Lower leg skin (tissue), 4 donors: ENCODE measurements at regions of chr2 and their contacts with region 1.

Region 1: GRCh38 chr2:230000118-230000841 is 68.4 kb downstream of the SLC16A14 start:
- DNase-seq: no peak
- H3K4me3 ChIP-seq: no peak overlapping the region
- CTCF ChIP-seq: no peak
- POLR2A ChIP-seq: no peak

Region 2: GRCh38 chr2:230153390-230153976 is 153.2 kb after region 1 on chr2:
- intact Hi-C with region 1: loop called (anchors 2 kb)
- DNase-seq: no peak
- H3K4me3 ChIP-seq: no peak overlapping the region
- CTCF ChIP-seq: no peak
- POLR2A ChIP-seq: no peak

Region 3: DNA sequence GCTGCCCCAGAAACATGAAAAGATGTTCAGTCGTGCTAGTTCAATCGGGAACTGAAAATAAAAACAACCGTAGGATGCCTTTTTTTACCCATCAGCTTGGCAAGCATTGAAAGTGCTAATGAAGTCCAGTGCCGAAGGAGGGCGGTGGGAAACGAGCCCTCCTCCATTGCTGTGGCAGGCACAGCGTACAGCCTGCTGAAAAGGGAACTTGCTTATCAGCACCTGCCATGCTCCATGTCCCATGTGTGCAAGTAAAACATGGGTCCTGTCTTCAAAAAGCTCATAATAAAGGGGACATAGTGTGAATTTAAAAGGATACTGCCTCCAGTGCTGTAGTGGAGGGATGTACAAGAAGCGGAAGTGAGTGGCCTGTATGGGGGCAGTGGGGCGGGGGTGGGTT is 1280.6 kb after region 1 on chr2:
- intact Hi-C with region 1: no loop called
- DNase-seq: no peak
- H3K4me3 ChIP-seq: no peak overlapping the region
- CTCF ChIP-seq: no peak
- POLR2A ChIP-seq: no peak